Right ventricle myocardium inferior (tissue), 1 donor: ENCODE measurements at regions of chr2 and their contacts with region 1.

Region 1: GRCh38 chr2:165163761-165164160 is 40.1 kb downstream of the SCN3A start:
- DNase-seq: no peak
- ATAC-seq: no peak

Region 2: GRCh38 chr2:165149439-165149838 is 14.3 kb before region 1 on chr2:
- intact Hi-C with region 1: loop called (anchors 1 kb)
- DNase-seq: no peak
- ATAC-seq: no peak